Naive thymus-derived CD4-positive, alpha-beta T cell (primary cell): ENCODE measurements at regions of chr13 and their contacts with region 1.

Region 1: GRCh38 chr13:46796515-46797474 is at the start of gene ESD:
- DNase-seq: peak; percentile 75 to 92 (median 85)
- ATAC-seq: peak; percentile 97
- H3K4me3 ChIP-seq: peak within 1 kb of the TSS; percentile 85
- H3K4me3 Mint-ChIP-seq: peak within 1 kb of the TSS; percentile 91 to 99 (median 93)
- H3K27ac ChIP-seq: peak within 1 kb of the TSS; percentile 82
- H3K27ac Mint-ChIP-seq: peak within 1 kb of the TSS; percentile 92 to 99 (median 98)
- H3K4me1 ChIP-seq: peaks cover 14 to 33% of the 10 kb centered on the region in 2 donors
- H3K4me1 Mint-ChIP-seq: peaks cover 20 to 53% (median 48%) of the 10 kb centered on the region in 7 donors
- H3K27me3 ChIP-seq: no peaks in the 10 kb centered on the region
- H3K27me3 Mint-ChIP-seq: peaks cover 0 to 7% (median 0%) of the 10 kb centered on the region in 5 donors
- total RNA-seq, gene ESD: 35.3 to 80.1 (median 57.0) TPM

Region 2: GRCh38 chr13:45393941-45394570 is 1402.7 kb before region 1 on chr13:
- CTCF ChIA-PET with region 1: no interaction called
- POLR2A ChIA-PET with region 1: no interaction called
- intact Hi-C with region 1: no loop called
- DNase-seq: peak in 1 of 9 donors; percentile 33
- ATAC-seq: peak; percentile 52
- H3K4me3 ChIP-seq: no peak overlapping the region
- H3K4me3 Mint-ChIP-seq: no peak overlapping the region
- H3K27ac ChIP-seq: no peak overlapping the region
- H3K27ac Mint-ChIP-seq: peak overlapping the region in 8 of 9 donors; percentile 16 to 95 (median 72)
- H3K4me1 ChIP-seq: peaks cover 10 to 20% of the 10 kb centered on the region in 2 donors
- H3K4me1 Mint-ChIP-seq: peaks cover 30 to 49% (median 48%) of the 10 kb centered on the region in 7 donors
- H3K27me3 ChIP-seq: no peaks in the 10 kb centered on the region
- H3K27me3 Mint-ChIP-seq: no peaks in the 10 kb centered on the region

Region 3: GRCh38 chr13:46668302-46668720 is 128.5 kb before region 1 on chr13:
- CTCF ChIA-PET with region 1: no interaction called
- POLR2A ChIA-PET with region 1: no interaction called
- intact Hi-C with region 1: loop called (anchors 5 kb)
- DNase-seq: no peak
- ATAC-seq: peak; percentile 49
- H3K4me3 ChIP-seq: peak overlapping the region; percentile 55
- H3K4me3 Mint-ChIP-seq: peak overlapping the region; percentile 78 to 89 (median 84)
- H3K27ac ChIP-seq: peak overlapping the region; percentile 56
- H3K27ac Mint-ChIP-seq: peak overlapping the region; percentile 79 to 93 (median 88)
- H3K4me1 ChIP-seq: peaks cover 0 to 26% of the 10 kb centered on the region in 2 donors
- H3K4me1 Mint-ChIP-seq: peaks cover 35 to 65% (median 52%) of the 10 kb centered on the region in 7 donors
- H3K27me3 ChIP-seq: no peaks in the 10 kb centered on the region
- H3K27me3 Mint-ChIP-seq: no peaks in the 10 kb centered on the region

Region 4: GRCh38 chr13:46751811-46752635 is 44.8 kb before region 1 on chr13:
- CTCF ChIA-PET with region 1: no interaction called
- POLR2A ChIA-PET with region 1: no interaction called
- intact Hi-C with region 1: loop called in 1 of 2 experiments (anchors 2 kb)
- DNase-seq: peak in 8 of 9 donors; percentile 11 to 57 (median 23)
- ATAC-seq: peak; percentile 92
- H3K4me3 ChIP-seq: no peak overlapping the region
- H3K4me3 Mint-ChIP-seq: peak overlapping the region in 9 of 10 donors; percentile 5 to 71 (median 59)
- H3K27ac ChIP-seq: peak overlapping the region; percentile 16
- H3K27ac Mint-ChIP-seq: peak overlapping the region in 8 of 9 donors; percentile 39 to 85 (median 78)
- H3K4me1 ChIP-seq: peaks cover 11 to 13% of the 10 kb centered on the region in 2 donors
- H3K4me1 Mint-ChIP-seq: peaks cover 10 to 44% (median 34%) of the 10 kb centered on the region in 7 donors
- H3K27me3 ChIP-seq: no peaks in the 10 kb centered on the region
- H3K27me3 Mint-ChIP-seq: no peaks in the 10 kb centered on the region

Region 5: DNA sequence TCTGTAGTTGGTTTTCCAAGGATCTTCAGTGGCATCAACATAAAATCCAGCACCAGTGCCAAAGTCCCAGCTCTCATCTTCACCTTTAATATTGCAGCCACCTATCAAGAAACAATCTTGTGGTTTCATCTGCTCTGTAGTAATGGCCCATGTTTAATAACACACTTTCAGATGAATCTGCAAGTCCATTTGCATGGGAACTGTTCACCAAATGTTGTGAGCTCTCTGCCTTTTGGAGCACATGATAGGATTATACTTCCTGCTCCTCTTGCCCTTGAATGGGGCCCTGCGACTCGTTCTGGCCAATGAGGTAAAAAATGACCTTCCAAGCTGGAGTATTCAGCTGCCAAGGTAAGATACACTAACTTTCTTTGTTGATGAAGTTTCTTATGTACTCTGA is 14.1 kb before region 1 on chr13:
- CTCF ChIA-PET with region 1: no interaction called
- POLR2A ChIA-PET with region 1: no interaction called
- intact Hi-C with region 1: loop called in 1 of 2 experiments (anchors 1 kb)
- DNase-seq: no peak
- ATAC-seq: no peak
- H3K4me3 ChIP-seq: no peak overlapping the region
- H3K4me3 Mint-ChIP-seq: no peak overlapping the region
- H3K27ac ChIP-seq: no peak overlapping the region
- H3K27ac Mint-ChIP-seq: peak overlapping the region in 1 of 9 donors; percentile 3
- H3K4me1 ChIP-seq: no peaks in the 10 kb centered on the region
- H3K4me1 Mint-ChIP-seq: peaks cover 1 to 15% (median 5%) of the 10 kb centered on the region in 7 donors
- H3K27me3 ChIP-seq: no peaks in the 10 kb centered on the region
- H3K27me3 Mint-ChIP-seq: no peaks in the 10 kb centered on the region

Region 6: DNA sequence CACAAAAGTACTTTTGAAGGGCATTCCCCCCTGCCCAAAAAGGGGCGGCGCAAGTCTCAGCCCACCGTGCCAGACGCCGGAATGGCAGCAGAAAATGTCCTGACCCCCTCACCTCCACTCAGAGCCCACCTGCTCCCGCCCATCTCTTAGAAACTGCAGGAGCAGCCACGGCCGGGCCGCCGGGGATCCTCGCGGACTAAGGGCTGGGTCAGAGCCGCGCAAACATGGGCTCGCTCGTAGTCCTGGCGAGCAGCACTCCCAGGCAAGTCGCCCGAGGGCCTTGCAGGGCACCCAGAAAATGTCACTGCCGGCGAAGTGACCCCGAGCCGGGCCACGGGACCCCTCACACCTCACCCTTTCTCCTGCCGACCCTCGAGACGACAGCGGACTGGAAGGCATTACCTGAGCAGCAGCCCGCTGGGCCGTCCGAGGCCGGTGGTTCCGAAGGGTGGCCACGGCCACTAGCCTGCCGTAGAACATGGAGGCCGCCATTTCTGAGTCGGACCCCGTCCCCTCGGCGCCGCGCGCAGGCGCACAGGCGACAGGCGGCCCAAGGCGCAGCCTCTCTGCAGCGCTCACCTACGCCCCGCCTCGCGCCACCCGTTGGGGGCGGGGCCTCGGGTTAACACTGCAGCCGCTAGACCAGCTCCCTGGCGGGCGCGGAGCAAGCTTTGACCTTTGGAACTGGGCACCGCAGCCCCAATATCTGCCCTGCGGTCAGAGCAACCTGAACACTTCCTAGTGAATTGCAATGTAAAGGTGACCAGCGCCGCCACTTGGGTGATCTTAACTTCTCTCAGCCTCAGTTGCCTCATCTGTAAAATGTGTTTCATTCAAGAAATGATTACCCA is 1204.2 kb after region 1 on chr13 and contains the start of gene SUCLA2:
- CTCF ChIA-PET with region 1: no interaction called
- POLR2A ChIA-PET with region 1: no interaction called
- intact Hi-C with region 1: loop called (anchors 5 to 10 kb)
- DNase-seq: peak; percentile 75 to 96 (median 88)
- ATAC-seq: peak; percentile 100
- H3K4me3 ChIP-seq: peak within 1 kb of the TSS; percentile 97
- H3K4me3 Mint-ChIP-seq: peak within 1 kb of the TSS; percentile 88 to 97 (median 96)
- H3K27ac ChIP-seq: peak within 1 kb of the TSS; percentile 81
- H3K27ac Mint-ChIP-seq: peak within 1 kb of the TSS; percentile 75 to 96 (median 91)
- H3K4me1 ChIP-seq: peaks cover 7 to 10% of the 10 kb centered on the region in 2 donors
- H3K4me1 Mint-ChIP-seq: peaks cover 24 to 48% (median 42%) of the 10 kb centered on the region in 7 donors
- H3K27me3 ChIP-seq: no peaks in the 10 kb centered on the region
- H3K27me3 Mint-ChIP-seq: peaks cover 0 to 2% (median 0%) of the 10 kb centered on the region in 5 donors
- total RNA-seq, gene SUCLA2: 20.0 to 36.6 (median 26.4) TPM

Region 7: GRCh38 chr13:48037346-48038173 is 1240.8 kb after region 1 on chr13 and contains the start of gene NUDT15:
- CTCF ChIA-PET with region 1: no interaction called
- POLR2A ChIA-PET with region 1: no interaction called
- intact Hi-C with region 1: loop called in 1 of 2 experiments (anchors 1 kb)
- DNase-seq: peak; percentile 93 to 98 (median 97)
- ATAC-seq: peak; percentile 96
- H3K4me3 ChIP-seq: peak within 1 kb of the TSS; percentile 90
- H3K4me3 Mint-ChIP-seq: peak within 1 kb of the TSS; percentile 82 to 98 (median 95)
- H3K27ac ChIP-seq: peak within 1 kb of the TSS; percentile 91
- H3K27ac Mint-ChIP-seq: peak within 1 kb of the TSS; percentile 96 to 100 (median 97)
- H3K4me1 ChIP-seq: peaks cover 14 to 15% of the 10 kb centered on the region in 2 donors
- H3K4me1 Mint-ChIP-seq: peaks cover 15 to 52% (median 40%) of the 10 kb centered on the region in 7 donors
- H3K27me3 ChIP-seq: no peaks in the 10 kb centered on the region
- H3K27me3 Mint-ChIP-seq: no peaks in the 10 kb centered on the region
- total RNA-seq, gene NUDT15: 4.3 to 13.6 (median 8.7) TPM